ENCODE measurements at regions of chr3 and their contacts with region 1.

Region 1: GRCh38 chr3:177516158-177517011 is 319.1 kb upstream of the TBL1XR1 start:
- DNase-seq: no peak
- ATAC-seq: peak in 3 of 4 donors; percentile 34 to 52 (median 38)
- H3K4me3 ChIP-seq: no peak overlapping the region
- H3K27ac ChIP-seq: no peak overlapping the region
- H3K4me1 ChIP-seq: peaks cover 7 to 9% (median 7%) of the 10 kb centered on the region in 3 donors
- H3K27me3 ChIP-seq: no peaks in the 10 kb centered on the region
- CTCF ChIP-seq: no peak

Region 2: GRCh38 chr3:177337541-177338331 is 178.6 kb before region 1 on chr3:
- intact Hi-C with region 1: no loop called
- DNase-seq: no peak
- ATAC-seq: peak in 1 of 4 donors; percentile 13
- H3K4me3 ChIP-seq: no peak overlapping the region
- H3K27ac ChIP-seq: peak overlapping the region in 3 of 4 donors; percentile 7 to 61 (median 47)
- H3K4me1 ChIP-seq: no peaks in the 10 kb centered on the region
- H3K27me3 ChIP-seq: no peaks in the 10 kb centered on the region
- CTCF ChIP-seq: no peak

Region 3: DNA sequence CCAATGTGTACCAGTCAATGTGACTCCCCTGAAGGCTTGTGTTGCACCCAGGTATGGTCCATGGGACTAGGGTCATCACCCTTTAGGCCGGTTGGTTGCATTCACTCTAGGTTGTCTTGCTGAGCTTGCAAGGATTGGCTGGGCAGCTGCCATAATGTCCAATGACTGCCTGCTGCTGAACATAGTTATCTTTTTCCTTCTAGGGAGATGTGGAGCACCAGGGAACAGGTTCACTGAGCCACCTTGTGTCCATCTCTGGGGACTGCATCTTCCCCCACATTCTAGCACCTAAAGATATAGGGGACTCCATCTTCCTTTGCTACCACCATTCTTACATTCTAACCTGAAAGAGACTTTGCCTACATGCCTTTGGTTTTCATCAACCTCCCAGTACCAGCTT is 261.3 kb after region 1 on chr3:
- intact Hi-C with region 1: loop called in 1 of 3 experiments (anchors 10 kb)
- DNase-seq: peak in 5 of 6 donors; percentile 35 to 76 (median 39)
- ATAC-seq: peak; percentile 90 to 97 (median 94)
- H3K4me3 ChIP-seq: no peak overlapping the region
- H3K27ac ChIP-seq: no peak overlapping the region
- H3K4me1 ChIP-seq: no peaks in the 10 kb centered on the region
- H3K27me3 ChIP-seq: no peaks in the 10 kb centered on the region
- CTCF ChIP-seq: peak; percentile 6 to 54 (median 41)

Region 4: DNA sequence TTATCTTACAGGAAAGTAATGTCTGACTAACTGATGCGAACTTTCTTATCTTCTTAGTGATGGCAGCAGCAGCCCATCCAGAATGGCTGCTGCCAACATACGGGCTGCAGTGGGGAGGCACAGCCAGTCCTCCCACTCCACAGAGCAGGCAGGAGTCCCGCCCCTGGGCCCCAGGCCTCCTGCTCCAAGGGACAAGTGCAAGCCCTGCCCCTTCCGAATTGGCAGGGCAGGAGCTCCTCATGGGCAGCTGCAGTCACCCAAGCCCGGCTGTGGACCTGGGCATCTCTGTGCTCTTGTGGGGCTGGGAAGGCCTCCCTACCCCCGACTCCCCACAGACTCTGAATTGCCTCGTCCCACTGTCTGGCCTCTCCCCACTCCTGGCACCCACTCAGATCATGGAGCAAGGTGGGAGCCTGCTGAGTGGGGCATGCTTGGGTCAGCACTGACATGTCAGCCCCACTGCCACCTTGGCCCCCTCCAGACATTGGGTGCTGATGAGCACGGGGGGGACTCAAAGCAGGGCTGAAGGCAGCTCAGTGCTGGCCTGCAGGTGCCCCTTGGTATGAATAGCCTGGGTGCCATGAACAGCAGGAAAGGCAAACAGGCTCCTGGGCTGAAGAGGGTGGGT is 401.0 kb after region 1 on chr3:
- intact Hi-C with region 1: no loop called
- DNase-seq: peak in 1 of 6 donors; percentile 45
- ATAC-seq: peak in 1 of 4 donors; percentile 12
- H3K4me3 ChIP-seq: no peak overlapping the region
- H3K27ac ChIP-seq: no peak overlapping the region
- H3K4me1 ChIP-seq: no peaks in the 10 kb centered on the region
- H3K27me3 ChIP-seq: no peaks in the 10 kb centered on the region
- CTCF ChIP-seq: no peak

Measured in pancreas (tissue), 10 donors.